ENCODE measurements at regions of chr22 and their contacts with region 1.

Region 1: GRCh38 chr22:37316875-37317371 is 34.6 kb downstream of the CYTH4 start:
- DNase-seq: peak; percentile 37 to 75 (median 66)
- ATAC-seq: peak; percentile 84
- H3K4me3 ChIP-seq: no peak overlapping the region
- H3K4me3 Mint-ChIP-seq: no peak overlapping the region
- H3K27ac ChIP-seq: no peak overlapping the region
- H3K27ac Mint-ChIP-seq: peak overlapping the region in 6 of 9 donors; percentile 17 to 77 (median 51)
- H3K4me1 ChIP-seq: peaks cover 21 to 31% of the 10 kb centered on the region in 2 donors
- H3K4me1 Mint-ChIP-seq: peaks cover 22 to 47% (median 42%) of the 10 kb centered on the region in 7 donors
- H3K27me3 ChIP-seq: no peaks in the 10 kb centered on the region
- H3K27me3 Mint-ChIP-seq: peaks cover 0 to 14% (median 0%) of the 10 kb centered on the region in 5 donors

Region 2: GRCh38 chr22:37199103-37199759 is 117.7 kb before region 1 on chr22:
- CTCF ChIA-PET with region 1: no interaction called
- POLR2A ChIA-PET with region 1: no interaction called
- intact Hi-C with region 1: no loop called
- DNase-seq: peak; percentile 94 to 100 (median 99)
- ATAC-seq: peak; percentile 98
- H3K4me3 ChIP-seq: peak overlapping the region; percentile 90
- H3K4me3 Mint-ChIP-seq: peak overlapping the region; percentile 80 to 90 (median 86)
- H3K27ac ChIP-seq: peak overlapping the region; percentile 86
- H3K27ac Mint-ChIP-seq: peak overlapping the region; percentile 87 to 99 (median 96)
- H3K4me1 ChIP-seq: peaks cover 24 to 33% of the 10 kb centered on the region in 2 donors
- H3K4me1 Mint-ChIP-seq: peaks cover 19 to 60% (median 41%) of the 10 kb centered on the region in 7 donors
- H3K27me3 ChIP-seq: no peaks in the 10 kb centered on the region
- H3K27me3 Mint-ChIP-seq: no peaks in the 10 kb centered on the region

Region 3: DNA sequence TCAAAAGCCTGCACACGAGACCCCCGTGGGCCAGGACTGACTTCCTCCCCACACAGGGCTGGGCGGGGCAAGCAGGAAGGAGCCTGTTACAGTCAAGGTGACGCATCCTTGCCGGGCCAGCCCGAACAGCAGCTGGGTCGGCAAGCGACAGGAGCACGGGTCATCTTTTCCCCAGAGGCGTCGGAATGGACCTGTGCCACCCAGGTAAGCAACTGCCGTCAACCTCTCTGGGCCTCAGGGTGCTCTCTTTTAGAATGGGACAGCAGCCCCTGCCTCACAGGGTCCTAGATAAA is 34.6 kb before region 1 on chr22 and contains the start of gene CYTH4:
- CTCF ChIA-PET with region 1: interaction called, 5 read pairs
- POLR2A ChIA-PET with region 1: interaction called, 57 read pairs
- intact Hi-C with region 1: no loop called
- DNase-seq: peak; percentile 48 to 76 (median 67)
- ATAC-seq: peak; percentile 78
- H3K4me3 ChIP-seq: peak within 1 kb of the TSS; percentile 89
- H3K4me3 Mint-ChIP-seq: peak within 1 kb of the TSS; percentile 90 to 98 (median 96)
- H3K27ac ChIP-seq: peak within 1 kb of the TSS; percentile 85
- H3K27ac Mint-ChIP-seq: peak within 1 kb of the TSS; percentile 90 to 99 (median 98)
- H3K4me1 ChIP-seq: peaks cover 16 to 27% of the 10 kb centered on the region in 2 donors
- H3K4me1 Mint-ChIP-seq: peaks cover 41 to 83% (median 62%) of the 10 kb centered on the region in 7 donors
- H3K27me3 ChIP-seq: no peaks in the 10 kb centered on the region
- H3K27me3 Mint-ChIP-seq: no peaks in the 10 kb centered on the region
- total RNA-seq, gene CYTH4: 123 to 227 (median 214) TPM

Region 4: GRCh38 chr22:37300551-37301017 is 16.3 kb before region 1 on chr22:
- CTCF ChIA-PET with region 1: interaction called, 8 read pairs
- POLR2A ChIA-PET with region 1: interaction called, 25 read pairs
- intact Hi-C with region 1: no loop called
- DNase-seq: peak in 8 of 9 donors; percentile 37 to 54 (median 47)
- ATAC-seq: peak; percentile 48
- H3K4me3 ChIP-seq: peak overlapping the region; percentile 21
- H3K4me3 Mint-ChIP-seq: peak overlapping the region; percentile 60 to 88 (median 76)
- H3K27ac ChIP-seq: peak overlapping the region; percentile 77
- H3K27ac Mint-ChIP-seq: peak overlapping the region; percentile 93 to 99 (median 96)
- H3K4me1 ChIP-seq: peaks cover 26 to 63% of the 10 kb centered on the region in 2 donors
- H3K4me1 Mint-ChIP-seq: peaks cover 47 to 83% (median 78%) of the 10 kb centered on the region in 7 donors
- H3K27me3 ChIP-seq: no peaks in the 10 kb centered on the region
- H3K27me3 Mint-ChIP-seq: no peaks in the 10 kb centered on the region

Region 5: GRCh38 chr22:37428649-37429586 is 112.0 kb after region 1 on chr22:
- CTCF ChIA-PET with region 1: interaction called, 33 read pairs
- POLR2A ChIA-PET with region 1: interaction called, 4 read pairs
- intact Hi-C with region 1: loop called (anchors 1 kb)
- DNase-seq: peak; percentile 23 to 64 (median 54)
- ATAC-seq: peak; percentile 69
- H3K4me3 ChIP-seq: no peak overlapping the region
- H3K4me3 Mint-ChIP-seq: peak overlapping the region in 8 of 10 donors; percentile 24 to 79 (median 40)
- H3K27ac ChIP-seq: no peak overlapping the region
- H3K27ac Mint-ChIP-seq: no peak overlapping the region
- H3K4me1 ChIP-seq: peaks cover 5 to 8% of the 10 kb centered on the region in 2 donors
- H3K4me1 Mint-ChIP-seq: peaks cover 0 to 25% (median 0%) of the 10 kb centered on the region in 7 donors
- H3K27me3 ChIP-seq: peaks cover 12 to 14% of the 10 kb centered on the region in 2 donors
- H3K27me3 Mint-ChIP-seq: peaks cover 42 to 62% (median 52%) of the 10 kb centered on the region in 5 donors

Region 6: DNA sequence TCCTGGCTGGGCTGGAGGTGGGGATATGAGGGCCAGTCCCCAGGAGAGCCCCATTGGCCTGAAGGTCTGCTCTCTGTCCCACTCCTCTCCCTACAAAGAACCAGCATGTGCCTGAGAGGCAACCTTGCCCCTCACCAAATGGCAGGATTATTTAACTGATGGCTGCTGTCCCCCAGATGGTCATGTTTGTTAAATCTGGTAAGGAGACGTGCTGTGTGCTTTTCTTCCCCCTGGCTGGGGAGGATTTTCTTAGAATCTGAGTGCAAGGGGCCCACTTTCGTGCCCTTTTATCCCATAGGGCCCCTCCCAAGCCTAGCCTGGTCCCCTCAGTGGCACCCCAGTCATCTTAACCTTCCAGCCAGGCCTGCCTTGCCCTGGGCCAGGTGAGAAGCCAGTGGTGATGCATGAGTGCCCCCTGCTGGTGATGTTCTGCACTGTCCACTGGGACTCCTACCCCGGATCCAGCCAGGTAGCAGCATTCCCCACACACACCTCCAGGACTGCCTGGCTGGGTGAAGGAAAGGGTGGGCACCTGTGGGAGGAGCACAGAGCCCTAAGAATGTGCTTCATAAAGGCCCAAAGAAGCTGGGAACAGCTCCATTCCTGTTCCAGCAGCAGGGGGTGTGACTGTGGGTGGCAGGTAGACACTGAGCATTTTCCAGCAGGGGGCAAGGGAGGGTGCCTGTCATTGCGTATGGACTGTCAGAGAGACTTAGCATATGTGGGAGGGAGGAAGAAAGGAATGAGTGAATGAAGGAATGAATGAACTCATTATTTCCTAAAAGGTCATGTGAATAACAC is 140.4 kb after region 1 on chr22:
- CTCF ChIA-PET with region 1: interaction called, 10 read pairs
- POLR2A ChIA-PET with region 1: interaction called, 3 read pairs
- intact Hi-C with region 1: loop called in 1 of 2 experiments (anchors 1 kb)
- DNase-seq: peak; percentile 66 to 88 (median 77)
- ATAC-seq: peak; percentile 96
- H3K4me3 ChIP-seq: no peak overlapping the region
- H3K4me3 Mint-ChIP-seq: no peak overlapping the region
- H3K27ac ChIP-seq: no peak overlapping the region
- H3K27ac Mint-ChIP-seq: peak overlapping the region in 1 of 9 donors; percentile 51
- H3K4me1 ChIP-seq: no peaks in the 10 kb centered on the region
- H3K4me1 Mint-ChIP-seq: peaks cover 0 to 9% (median 5%) of the 10 kb centered on the region in 7 donors
- H3K27me3 ChIP-seq: no peaks in the 10 kb centered on the region
- H3K27me3 Mint-ChIP-seq: no peaks in the 10 kb centered on the region

Region 7: GRCh38 chr22:37498289-37498909 is 181.5 kb after region 1 on chr22:
- CTCF ChIA-PET with region 1: interaction called, 5 read pairs
- POLR2A ChIA-PET with region 1: no interaction called
- intact Hi-C with region 1: loop called in 1 of 2 experiments (anchors 1 kb)
- DNase-seq: peak; percentile 51 to 80 (median 72)
- ATAC-seq: peak; percentile 94
- H3K4me3 ChIP-seq: no peak overlapping the region
- H3K4me3 Mint-ChIP-seq: no peak overlapping the region
- H3K27ac ChIP-seq: no peak overlapping the region
- H3K27ac Mint-ChIP-seq: no peak overlapping the region
- H3K4me1 ChIP-seq: peaks cover 4 to 21% of the 10 kb centered on the region in 2 donors
- H3K4me1 Mint-ChIP-seq: peaks cover 17 to 35% (median 28%) of the 10 kb centered on the region in 7 donors
- H3K27me3 ChIP-seq: no peaks in the 10 kb centered on the region
- H3K27me3 Mint-ChIP-seq: peaks cover 0 to 5% (median 0%) of the 10 kb centered on the region in 5 donors

Measured in naive thymus-derived CD4-positive, alpha-beta T cell (primary cell).